Naive thymus-derived CD4-positive, alpha-beta T cell (primary cell): ENCODE measurements at regions of chr7 and their contacts with region 1.

Region 1: DNA sequence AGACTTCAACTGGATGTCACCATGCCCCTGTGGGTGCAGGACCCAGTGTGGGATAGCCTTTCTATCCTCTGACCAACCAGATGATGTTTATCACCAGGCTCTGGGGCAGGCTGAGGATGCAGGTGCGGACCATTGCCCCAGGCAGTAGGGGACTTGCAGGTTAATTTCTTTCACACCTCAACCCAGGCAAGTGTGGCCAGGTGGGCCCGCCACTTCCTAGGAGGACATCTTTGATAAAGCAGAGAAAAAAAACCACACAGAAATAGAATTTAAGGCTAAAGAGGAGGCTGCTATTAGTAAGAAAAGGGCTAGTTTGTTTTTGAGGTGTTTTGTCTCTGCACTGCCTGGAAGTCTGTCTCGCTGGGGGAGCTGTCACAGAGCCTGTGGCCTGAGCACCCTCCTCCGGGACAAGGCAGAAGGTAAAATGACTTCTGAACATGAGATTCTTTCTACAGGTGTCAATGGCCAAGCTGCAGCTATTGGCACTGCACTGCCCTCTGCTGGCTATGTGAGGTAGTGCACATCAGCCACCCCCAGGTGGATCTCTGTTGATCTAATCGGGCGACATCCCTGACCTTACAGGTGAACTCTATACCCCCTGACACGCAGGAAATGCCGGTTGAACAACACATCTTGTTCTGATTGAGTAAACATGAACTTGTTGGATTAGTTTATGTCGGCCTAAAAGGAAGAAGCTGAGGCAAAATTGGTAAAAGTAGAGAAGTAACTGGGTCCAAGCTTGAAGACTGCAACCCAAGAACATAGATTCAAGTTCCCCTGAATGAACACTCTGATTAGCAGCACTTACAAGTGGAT is 21.0 kb downstream of the UPP1 start:
- DNase-seq: peak; percentile 74 to 91 (median 85)
- ATAC-seq: peak; percentile 97
- H3K4me3 ChIP-seq: no peak overlapping the region
- H3K4me3 Mint-ChIP-seq: peak overlapping the region in 4 of 10 donors; percentile 0 to 35 (median 20)
- H3K27ac ChIP-seq: peak overlapping the region; percentile 10
- H3K27ac Mint-ChIP-seq: peak overlapping the region; percentile 59 to 88 (median 81)
- H3K4me1 ChIP-seq: peaks cover 8 to 14% of the 10 kb centered on the region in 2 donors
- H3K4me1 Mint-ChIP-seq: peaks cover 10 to 32% (median 11%) of the 10 kb centered on the region in 7 donors
- H3K27me3 ChIP-seq: no peaks in the 10 kb centered on the region
- H3K27me3 Mint-ChIP-seq: no peaks in the 10 kb centered on the region

Region 2: DNA sequence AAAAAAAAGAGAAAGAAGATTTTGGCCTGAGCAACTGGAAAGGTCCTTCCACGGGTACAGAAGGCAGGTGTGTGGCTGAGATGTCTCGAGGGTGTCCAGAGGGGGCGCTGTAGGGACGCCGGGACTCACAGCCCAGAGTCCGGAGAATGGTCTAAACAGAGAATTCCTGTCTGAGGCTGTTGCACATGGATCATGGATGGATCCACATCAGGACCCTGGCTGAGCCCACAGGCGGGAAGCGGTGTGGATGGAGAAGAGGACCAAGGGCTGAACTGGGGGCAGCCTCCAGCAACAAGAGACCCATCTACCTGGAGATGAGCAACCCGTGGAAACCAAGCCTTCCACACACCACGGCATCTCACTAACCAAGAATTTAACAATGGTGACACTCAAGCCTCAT is 216.8 kb before region 1 on chr7:
- CTCF ChIA-PET with region 1: no interaction called
- POLR2A ChIA-PET with region 1: no interaction called
- intact Hi-C with region 1: no loop called
- DNase-seq: no peak
- ATAC-seq: no peak
- H3K4me3 ChIP-seq: no peak overlapping the region
- H3K4me3 Mint-ChIP-seq: no peak overlapping the region
- H3K27ac ChIP-seq: no peak overlapping the region
- H3K27ac Mint-ChIP-seq: no peak overlapping the region
- H3K4me1 ChIP-seq: no peaks in the 10 kb centered on the region
- H3K4me1 Mint-ChIP-seq: peaks cover 0 to 6% (median 0%) of the 10 kb centered on the region in 7 donors
- H3K27me3 ChIP-seq: no peaks in the 10 kb centered on the region
- H3K27me3 Mint-ChIP-seq: peaks cover 0 to 4% (median 0%) of the 10 kb centered on the region in 5 donors

Region 3: GRCh38 chr7:47945261-47946001 is 164.6 kb before region 1 on chr7:
- CTCF ChIA-PET with region 1: interaction called, 46 read pairs
- POLR2A ChIA-PET with region 1: interaction called, 3 read pairs
- intact Hi-C with region 1: loop called (anchors 1 kb)
- DNase-seq: peak; percentile 34 to 69 (median 56)
- ATAC-seq: peak; percentile 54
- H3K4me3 ChIP-seq: no peak overlapping the region
- H3K4me3 Mint-ChIP-seq: no peak overlapping the region
- H3K27ac ChIP-seq: no peak overlapping the region
- H3K27ac Mint-ChIP-seq: no peak overlapping the region
- H3K4me1 ChIP-seq: no peaks in the 10 kb centered on the region
- H3K4me1 Mint-ChIP-seq: no peaks in the 10 kb centered on the region
- H3K27me3 ChIP-seq: no peaks in the 10 kb centered on the region
- H3K27me3 Mint-ChIP-seq: no peaks in the 10 kb centered on the region

Region 4: DNA sequence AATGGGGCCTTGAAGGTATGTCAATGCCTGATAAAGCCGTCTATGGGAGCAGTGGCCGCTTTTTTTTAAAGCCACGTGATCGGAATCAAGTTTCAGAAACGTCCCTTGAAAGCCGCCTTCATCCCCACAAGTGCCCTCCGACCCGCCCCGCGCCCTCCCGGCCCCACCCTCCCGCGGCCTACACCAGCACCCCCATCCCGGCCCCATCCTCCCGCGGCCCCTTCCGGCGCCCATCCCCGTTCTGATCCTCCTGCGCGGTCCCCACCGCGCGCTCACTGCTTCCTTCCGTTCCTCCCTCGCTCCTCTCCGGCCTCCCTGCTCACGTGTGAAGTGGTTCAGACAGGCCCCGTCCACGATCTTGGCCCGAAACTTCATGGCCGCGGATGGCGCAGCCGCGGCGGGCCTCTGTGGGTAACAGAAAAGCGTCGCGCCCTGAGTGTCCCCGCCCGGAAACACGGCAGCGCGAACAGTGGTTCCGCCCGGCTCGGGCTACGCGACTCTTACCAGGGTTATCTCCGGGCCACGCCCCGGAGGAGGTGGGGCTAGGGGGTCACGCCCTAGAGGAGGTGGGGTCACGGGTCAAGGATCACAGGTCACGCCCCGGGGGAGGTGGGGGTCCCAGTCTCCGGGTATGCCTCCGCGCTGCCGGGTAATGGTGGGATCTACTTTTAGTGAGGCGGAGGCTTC is 130.8 kb before region 1 on chr7 and contains the start of gene HUS1:
- CTCF ChIA-PET with region 1: no interaction called
- POLR2A ChIA-PET with region 1: interaction called, 5 read pairs
- intact Hi-C with region 1: loop called in 1 of 2 experiments (anchors 1 kb)
- DNase-seq: peak; percentile 86 to 95 (median 90)
- ATAC-seq: peak; percentile 100
- H3K4me3 ChIP-seq: peak within 1 kb of the TSS; percentile 90
- H3K4me3 Mint-ChIP-seq: peak within 1 kb of the TSS; percentile 81 to 99 (median 94)
- H3K27ac ChIP-seq: peak within 1 kb of the TSS; percentile 94
- H3K27ac Mint-ChIP-seq: peak within 1 kb of the TSS; percentile 93 to 100 (median 99)
- H3K4me1 ChIP-seq: peaks cover 10 to 13% of the 10 kb centered on the region in 2 donors
- H3K4me1 Mint-ChIP-seq: peaks cover 16 to 38% (median 32%) of the 10 kb centered on the region in 7 donors
- H3K27me3 ChIP-seq: no peaks in the 10 kb centered on the region
- H3K27me3 Mint-ChIP-seq: no peaks in the 10 kb centered on the region
- total RNA-seq, gene HUS1: 39.2 to 84.0 (median 79.2) TPM

Region 5: GRCh38 chr7:48035301-48035966 is 74.6 kb before region 1 on chr7 and contains the start of gene C7orf57:
- CTCF ChIA-PET with region 1: interaction called, 4 read pairs
- POLR2A ChIA-PET with region 1: interaction called, 3 read pairs
- intact Hi-C with region 1: loop called (anchors 1 kb)
- DNase-seq: peak; percentile 80 to 88 (median 83)
- ATAC-seq: peak; percentile 99
- H3K4me3 ChIP-seq: peak within 1 kb of the TSS; percentile 63
- H3K4me3 Mint-ChIP-seq: peak within 1 kb of the TSS; percentile 83 to 92 (median 88)
- H3K27ac ChIP-seq: peak within 1 kb of the TSS; percentile 34
- H3K27ac Mint-ChIP-seq: peak within 1 kb of the TSS in 7 of 9 donors; percentile 71 to 89 (median 80)
- H3K4me1 ChIP-seq: peaks cover 8 to 9% of the 10 kb centered on the region in 2 donors
- H3K4me1 Mint-ChIP-seq: peaks cover 4 to 14% (median 9%) of the 10 kb centered on the region in 7 donors
- H3K27me3 ChIP-seq: peaks cover 0 to 5% of the 10 kb centered on the region in 2 donors
- H3K27me3 Mint-ChIP-seq: peaks cover 9 to 60% (median 22%) of the 10 kb centered on the region in 5 donors
- total RNA-seq, gene C7orf57: 0.17 to 0.80 TPM in 2 of 5 experiments, not detected in the others

Region 6: GRCh38 chr7:48088559-48089045 is 21.5 kb before region 1 on chr7:
- CTCF ChIA-PET with region 1: interaction called, 6 read pairs
- POLR2A ChIA-PET with region 1: interaction called, 8 read pairs
- intact Hi-C with region 1: loop called (anchors 1 to 2 kb)
- DNase-seq: peak in 4 of 9 donors; percentile 73 to 89 (median 84)
- ATAC-seq: peak; percentile 15
- H3K4me3 ChIP-seq: peak overlapping the region; percentile 93
- H3K4me3 Mint-ChIP-seq: peak overlapping the region; percentile 80 to 95 (median 92)
- H3K27ac ChIP-seq: peak overlapping the region; percentile 81
- H3K27ac Mint-ChIP-seq: peak overlapping the region; percentile 81 to 98 (median 89)
- H3K4me1 ChIP-seq: peaks cover 24 to 72% of the 10 kb centered on the region in 2 donors
- H3K4me1 Mint-ChIP-seq: peaks cover 50 to 85% (median 74%) of the 10 kb centered on the region in 7 donors
- H3K27me3 ChIP-seq: no peaks in the 10 kb centered on the region
- H3K27me3 Mint-ChIP-seq: no peaks in the 10 kb centered on the region